ENCODE measurements at regions of chr22 and their contacts with region 1.

Region 1: GRCh38 chr22:20568989-20569769 is 61.8 kb downstream of the MED15 start:
- DNase-seq: peak; percentile 97
- H3K4me3 ChIP-seq: no peak overlapping the region
- H3K27me3 ChIP-seq: no peaks in the 10 kb centered on the region
- CTCF ChIP-seq: no peak

Region 2: GRCh38 chr22:20249797-20250354 is 319.3 kb before region 1 on chr22:
- CTCF ChIA-PET with region 1: no interaction called
- POLR2A ChIA-PET with region 1: no interaction called
- DNase-seq: no peak
- H3K4me3 ChIP-seq: no peak overlapping the region
- H3K27me3 ChIP-seq: peaks cover 5% of the 10 kb centered on the region; the same call in 1 of the 2 replicates
- CTCF ChIP-seq: no peak

Region 3: DNA sequence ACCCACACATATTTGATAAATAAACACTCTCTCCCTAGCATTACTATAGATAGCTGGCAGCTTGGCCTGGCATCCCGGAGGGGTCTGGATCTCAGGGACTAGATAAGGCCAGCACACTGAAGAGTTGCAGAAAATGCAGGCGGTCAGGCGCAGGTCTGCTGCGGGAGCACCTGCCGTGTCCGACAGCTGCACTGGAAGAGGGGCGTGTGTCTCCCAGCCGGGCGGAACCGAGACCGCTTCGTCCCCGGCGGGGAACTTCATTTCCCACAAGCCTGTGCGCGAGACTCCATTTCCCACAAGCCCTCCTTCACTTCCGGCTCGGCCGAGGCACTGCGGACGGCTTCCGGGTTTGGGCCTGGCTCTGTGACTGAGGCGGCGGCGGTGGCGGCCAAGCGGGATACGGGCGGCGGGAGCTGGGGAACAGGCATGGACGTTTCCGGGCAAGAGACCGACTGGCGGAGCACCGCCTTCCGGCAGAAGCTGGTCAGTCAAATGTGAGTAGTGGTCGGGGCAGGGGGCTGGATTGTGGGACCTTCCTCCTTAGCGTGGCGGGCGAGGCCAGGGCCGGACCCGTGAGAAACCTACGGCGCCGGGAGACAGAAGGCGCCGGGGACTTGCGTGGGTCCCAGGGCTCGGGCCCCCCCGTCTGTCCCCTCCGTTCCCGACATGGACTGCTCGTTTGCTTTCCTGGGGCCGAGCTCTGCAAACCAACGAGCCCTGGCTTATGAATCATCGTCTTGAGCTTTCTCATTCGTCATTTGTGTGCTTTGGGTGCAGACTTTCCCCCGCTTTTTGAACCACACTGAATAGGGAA is 61.7 kb before region 1 on chr22 and contains the start of gene MED15:
- CTCF ChIA-PET with region 1: interaction called, 21 read pairs
- POLR2A ChIA-PET with region 1: interaction called, 7 read pairs
- DNase-seq: no peak
- H3K4me3 ChIP-seq: peak within 1 kb of the TSS; percentile 87
- H3K27me3 ChIP-seq: no peaks in the 10 kb centered on the region
- CTCF ChIP-seq: no peak
- polyA plus RNA-seq, gene MED15: 24.2 and 42.7 TPM in 2 replicates

Region 4: GRCh38 chr22:20523086-20523983 is 45.8 kb before region 1 on chr22:
- CTCF ChIA-PET with region 1: interaction called, 82 read pairs
- POLR2A ChIA-PET with region 1: no interaction called
- DNase-seq: no peak
- H3K4me3 ChIP-seq: no peak overlapping the region
- H3K27me3 ChIP-seq: no peaks in the 10 kb centered on the region
- CTCF ChIP-seq: no peak

Region 5: GRCh38 chr22:20536590-20537324 is 32.4 kb before region 1 on chr22:
- CTCF ChIA-PET with region 1: interaction called, 82 read pairs
- POLR2A ChIA-PET with region 1: no interaction called
- DNase-seq: no peak
- H3K4me3 ChIP-seq: no peak overlapping the region
- H3K27me3 ChIP-seq: no peaks in the 10 kb centered on the region
- CTCF ChIP-seq: no peak

Region 6: GRCh38 chr22:20550821-20551744 is 18.1 kb before region 1 on chr22:
- CTCF ChIA-PET with region 1: interaction called, 184 read pairs
- POLR2A ChIA-PET with region 1: interaction called, 3 read pairs
- DNase-seq: no peak
- H3K4me3 ChIP-seq: no peak overlapping the region
- H3K27me3 ChIP-seq: no peaks in the 10 kb centered on the region
- CTCF ChIP-seq: no peak